ENCODE measurements at regions of chr3 and their contacts with region 1.

Region 1: DNA sequence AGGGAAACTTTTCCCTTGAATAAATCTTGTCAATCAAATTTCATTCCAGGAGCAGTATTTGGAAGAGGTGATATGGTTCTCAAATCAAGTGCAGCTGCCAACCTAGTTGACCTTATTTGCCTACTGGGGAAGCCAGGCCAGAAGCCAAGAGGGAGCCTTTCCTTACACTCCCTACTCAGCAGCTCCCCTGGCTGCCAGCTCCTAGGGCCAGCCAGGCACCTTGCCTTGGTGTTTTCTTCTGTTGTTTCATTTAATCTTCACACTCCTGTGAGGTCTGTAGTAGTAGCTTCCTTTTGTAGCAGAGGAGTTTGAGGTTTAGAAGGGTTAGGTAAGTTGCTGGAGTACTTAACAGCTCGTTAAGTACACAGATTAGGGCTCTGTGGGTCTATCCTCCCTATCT is 22.6 kb downstream of the MKRN2OS start:
- DNase-seq: no peak
- ATAC-seq: no peak
- H3K4me3 ChIP-seq: no peak overlapping the region
- H3K4me3 Mint-ChIP-seq: no peak overlapping the region
- H3K27ac ChIP-seq: no peak overlapping the region
- H3K27ac Mint-ChIP-seq: no peak overlapping the region
- H3K4me1 ChIP-seq: no peaks in the 10 kb centered on the region
- H3K4me1 Mint-ChIP-seq: no peaks in the 10 kb centered on the region
- H3K27me3 ChIP-seq: no peaks in the 10 kb centered on the region
- H3K27me3 Mint-ChIP-seq: no peaks in the 10 kb centered on the region

Region 2: DNA sequence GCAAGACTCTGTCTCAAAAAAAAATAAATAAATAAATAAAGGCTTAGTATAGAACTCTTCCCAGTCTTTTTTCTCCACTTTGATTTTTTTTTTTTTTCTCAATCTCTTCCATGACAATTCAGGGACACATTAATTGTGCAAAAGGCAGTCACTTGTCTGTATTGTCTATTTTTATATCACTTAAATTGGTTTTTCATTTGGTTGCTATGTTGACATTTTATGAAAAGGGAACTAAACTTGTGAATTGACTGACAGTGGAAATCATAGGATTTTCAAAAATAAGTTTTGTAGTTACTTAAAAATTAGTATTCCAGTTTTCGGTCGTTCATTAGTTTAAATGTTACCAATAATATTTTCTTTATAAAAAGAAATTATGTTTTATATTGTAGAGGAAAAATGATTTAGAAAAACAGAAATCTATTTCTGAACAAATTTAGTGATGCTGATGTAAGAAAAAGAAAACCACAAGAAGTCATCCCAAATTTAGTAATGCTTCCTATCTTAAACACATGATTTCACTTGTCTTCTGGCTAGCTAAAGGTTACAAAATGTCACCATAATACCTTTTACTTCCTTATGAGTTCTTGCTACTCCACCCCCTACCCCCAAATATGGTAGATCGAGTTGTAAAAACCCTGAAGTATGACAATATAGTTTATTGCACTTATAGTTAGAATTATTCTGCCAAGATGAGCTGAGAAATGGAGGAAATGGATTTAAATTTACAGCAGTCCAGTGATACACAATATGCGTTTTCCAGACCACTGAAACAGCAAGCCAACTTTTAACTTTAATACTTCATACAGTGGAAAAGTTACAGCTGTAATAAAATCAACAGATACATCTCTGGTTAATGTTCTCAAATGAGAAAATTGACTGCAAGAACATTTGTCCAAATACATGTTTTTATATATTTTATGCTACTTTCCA is 196.9 kb before region 1 on chr3:
- CTCF ChIA-PET with region 1: no interaction called
- POLR2A ChIA-PET with region 1: no interaction called
- DNase-seq: no peak
- ATAC-seq: no peak
- H3K4me3 ChIP-seq: no peak overlapping the region
- H3K4me3 Mint-ChIP-seq: no peak overlapping the region
- H3K27ac ChIP-seq: no peak overlapping the region
- H3K27ac Mint-ChIP-seq: no peak overlapping the region
- H3K4me1 ChIP-seq: no peaks in the 10 kb centered on the region
- H3K4me1 Mint-ChIP-seq: no peaks in the 10 kb centered on the region
- H3K27me3 ChIP-seq: no peaks in the 10 kb centered on the region
- H3K27me3 Mint-ChIP-seq: peaks cover 10 to 20% of the 10 kb centered on the region in 2 donors

Region 3: DNA sequence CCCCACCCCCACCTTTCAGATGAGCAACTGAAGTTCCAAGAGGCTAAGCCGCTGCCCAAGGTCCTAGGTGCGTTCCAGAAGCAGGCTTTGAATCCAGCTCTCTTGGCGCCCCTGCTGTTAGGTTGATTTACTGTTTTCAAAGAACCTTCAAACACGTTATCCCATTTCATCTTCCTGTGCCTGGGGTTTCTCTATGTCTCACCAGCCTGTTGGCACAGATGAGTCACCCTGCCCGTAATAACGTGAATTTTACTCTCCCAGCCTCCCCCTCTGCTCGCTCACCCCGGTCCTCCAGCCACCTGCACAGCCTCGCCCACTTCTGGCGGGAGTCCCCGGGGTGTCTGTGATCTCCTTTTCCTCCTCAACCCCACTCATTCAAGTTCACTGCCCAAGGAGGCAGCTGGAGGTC is 51.5 kb before region 1 on chr3:
- CTCF ChIA-PET with region 1: no interaction called
- POLR2A ChIA-PET with region 1: no interaction called
- DNase-seq: peak in 1 of 35 experiments; percentile 19
- ATAC-seq: peak in 2 of 4 experiments; percentile 39 to 40
- H3K4me3 ChIP-seq: no peak overlapping the region
- H3K4me3 Mint-ChIP-seq: no peak overlapping the region
- H3K27ac ChIP-seq: no peak overlapping the region
- H3K27ac Mint-ChIP-seq: no peak overlapping the region
- H3K4me1 ChIP-seq: peaks cover 0 to 5% of the 10 kb centered on the region in 2 experiments
- H3K4me1 Mint-ChIP-seq: peaks cover 0 to 22% (median 8%) of the 10 kb centered on the region in 3 donors
- H3K27me3 ChIP-seq: no peaks in the 10 kb centered on the region
- H3K27me3 Mint-ChIP-seq: no peaks in the 10 kb centered on the region

Region 4: GRCh38 chr3:12508291-12508700 is 14.4 kb before region 1 on chr3:
- CTCF ChIA-PET with region 1: no interaction called
- POLR2A ChIA-PET with region 1: no interaction called
- DNase-seq: no peak
- ATAC-seq: no peak
- H3K4me3 ChIP-seq: no peak overlapping the region
- H3K4me3 Mint-ChIP-seq: no peak overlapping the region
- H3K27ac ChIP-seq: no peak overlapping the region
- H3K27ac Mint-ChIP-seq: no peak overlapping the region
- H3K4me1 ChIP-seq: no peaks in the 10 kb centered on the region
- H3K4me1 Mint-ChIP-seq: no peaks in the 10 kb centered on the region
- H3K27me3 ChIP-seq: no peaks in the 10 kb centered on the region
- H3K27me3 Mint-ChIP-seq: no peaks in the 10 kb centered on the region

Region 5: GRCh38 chr3:13740795-13741194 is 1218.1 kb after region 1 on chr3:
- CTCF ChIA-PET with region 1: interaction called in 1 of 2 experiments, 17 read pairs
- POLR2A ChIA-PET with region 1: no interaction called
- DNase-seq: no peak
- ATAC-seq: no peak
- H3K4me3 ChIP-seq: no peak overlapping the region
- H3K4me3 Mint-ChIP-seq: no peak overlapping the region
- H3K27ac ChIP-seq: no peak overlapping the region
- H3K27ac Mint-ChIP-seq: no peak overlapping the region
- H3K4me1 ChIP-seq: peaks cover 0 to 2% of the 10 kb centered on the region in 2 experiments
- H3K4me1 Mint-ChIP-seq: no peaks in the 10 kb centered on the region
- H3K27me3 ChIP-seq: peaks cover 0 to 19% of the 10 kb centered on the region in 2 experiments
- H3K27me3 Mint-ChIP-seq: peaks cover 42 to 48% of the 10 kb centered on the region in 2 donors

Measured in T-cell (primary cell).